Activated T-helper 1 cell treated with anti-CD3 and anti-CD28 coated beads, Interleukin-12 subunit alpha, Interleukin-12 subunit beta, Interleukin-2, Interleukin-4 antibody, amounts not matched to agents 30 ng/mL and 10 ng/mL and 1 ng/mL, durations not matched to agents 14 hours and 24 hours and 36 hours (primary cell): ENCODE measurements at regions of chr13 and their contacts with region 1.

Region 1: DNA sequence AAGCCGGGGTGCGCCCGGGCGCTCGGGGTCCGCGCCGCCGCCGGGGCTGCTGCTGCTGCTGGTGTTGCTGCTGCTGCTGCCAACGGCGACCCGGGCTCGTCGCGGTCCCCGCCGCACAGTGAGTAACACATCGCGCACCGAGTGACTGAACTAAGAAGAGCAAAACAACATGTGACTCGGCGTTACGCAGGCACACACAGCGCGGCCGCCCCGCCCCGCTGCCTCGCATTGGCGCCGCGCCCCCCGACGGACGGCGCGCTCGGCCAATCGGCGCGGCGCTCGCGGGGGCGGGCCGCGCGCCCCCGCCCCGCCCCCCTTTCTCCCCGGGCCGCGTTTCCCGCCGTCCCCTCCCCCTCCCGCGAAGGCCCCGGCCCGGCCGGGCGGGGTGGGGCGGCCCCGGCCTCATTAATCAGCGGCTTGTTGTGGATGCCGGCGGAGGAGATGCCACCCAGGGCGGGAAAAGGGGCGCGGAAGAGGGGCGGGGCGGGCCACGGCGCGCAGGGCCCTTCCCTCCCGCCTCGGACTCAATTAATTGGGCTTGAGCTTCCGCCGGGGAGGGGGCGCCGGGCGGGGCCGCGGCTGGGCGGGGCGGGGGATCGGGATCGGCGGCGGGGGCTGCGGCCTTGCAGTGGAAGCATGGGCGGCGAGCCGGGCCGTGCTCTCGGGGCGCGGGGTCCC is at the start of gene IRS2:
- DNase-seq: peak; percentile 89
- H3K4me3 Mint-ChIP-seq: peak within 1 kb of the TSS; percentile 78
- H3K27ac Mint-ChIP-seq: peak within 1 kb of the TSS; percentile 78
- H3K4me1 Mint-ChIP-seq: peaks cover 12% of the 10 kb centered on the region
- H3K27me3 Mint-ChIP-seq: peaks cover 26% of the 10 kb centered on the region
- total RNA-seq, gene IRS2: 3.9 and 4.3 TPM in 2 replicates

Region 2: DNA sequence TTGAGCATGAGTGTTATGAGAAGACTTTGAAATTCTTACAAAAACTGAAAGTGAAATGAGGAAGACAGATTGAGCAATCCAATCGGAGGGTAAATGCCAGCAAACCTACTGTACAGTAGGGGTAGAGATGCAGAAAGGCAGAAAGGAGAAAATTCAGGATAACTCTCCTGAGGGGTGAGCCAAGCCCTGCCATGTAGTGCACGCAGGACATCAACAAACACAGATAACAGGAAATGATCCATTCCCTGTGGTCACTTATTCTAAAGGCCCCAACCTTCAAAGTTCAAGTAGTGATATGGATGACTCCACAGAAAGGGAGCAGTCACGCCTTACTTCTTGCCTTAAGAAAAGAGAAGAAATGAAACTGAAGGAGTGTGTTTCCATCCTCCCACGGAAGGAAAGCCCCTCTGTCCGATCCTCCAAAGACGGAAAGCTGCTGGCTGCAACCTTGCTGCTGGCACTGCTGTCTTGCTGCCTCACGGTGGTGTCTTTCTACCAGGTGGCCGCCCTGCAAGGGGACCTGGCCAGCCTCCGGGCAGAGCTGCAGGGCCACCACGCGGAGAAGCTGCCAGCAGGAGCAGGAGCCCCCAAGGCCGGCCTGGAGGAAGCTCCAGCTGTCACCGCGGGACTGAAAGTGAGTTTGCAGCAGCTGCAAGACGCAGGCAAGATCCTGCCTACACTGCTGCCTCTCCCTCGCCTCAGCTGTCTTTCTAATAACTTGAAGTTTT is 1516.8 kb before region 1 on chr13 and contains the start of gene TNFSF13B:
- intact Hi-C with region 1: loop called (anchors 5 kb)
- DNase-seq: peak; percentile 32
- H3K4me3 Mint-ChIP-seq: peak within 1 kb of the TSS; percentile 85
- H3K27ac Mint-ChIP-seq: peak within 1 kb of the TSS; percentile 87
- H3K4me1 Mint-ChIP-seq: peaks cover 57% of the 10 kb centered on the region
- H3K27me3 Mint-ChIP-seq: no peaks in the 10 kb centered on the region
- total RNA-seq, gene TNFSF13B: 2.9 and 3.4 TPM in 2 replicates

Region 3: DNA sequence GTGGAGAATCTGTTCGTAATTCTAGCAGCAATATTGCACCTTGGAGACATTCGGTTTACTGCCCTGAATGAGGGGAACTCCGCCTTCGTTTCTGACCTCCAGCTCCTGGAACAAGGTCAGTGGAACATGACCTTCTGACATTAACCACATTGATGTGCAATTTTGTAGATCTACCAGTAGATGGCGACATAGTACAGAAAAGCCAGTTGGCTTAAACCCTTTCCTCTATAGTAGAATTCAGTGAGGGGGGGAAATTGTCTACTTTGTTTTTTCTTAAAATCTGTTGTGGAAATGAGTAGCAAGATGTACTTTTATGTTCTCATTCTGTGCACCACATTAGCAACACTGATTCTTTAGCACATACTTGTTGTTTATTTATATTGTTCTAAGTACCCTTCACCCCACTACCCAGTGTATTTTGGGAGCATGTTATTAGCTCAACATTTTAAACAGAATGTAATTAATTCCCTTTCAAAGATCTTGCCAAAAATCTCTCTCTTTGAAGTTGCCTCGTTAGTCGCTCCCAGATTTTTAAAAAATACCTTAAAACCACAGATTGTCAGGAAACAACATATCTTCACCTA is 825.0 kb before region 1 on chr13:
- intact Hi-C with region 1: loop called (anchors 1 kb)
- DNase-seq: no peak
- H3K4me3 Mint-ChIP-seq: no peak overlapping the region
- H3K27ac Mint-ChIP-seq: no peak overlapping the region
- H3K4me1 Mint-ChIP-seq: peaks cover 4% of the 10 kb centered on the region
- H3K27me3 Mint-ChIP-seq: peaks cover 4% of the 10 kb centered on the region

Region 4: GRCh38 chr13:109569958-109570711 is 216.5 kb before region 1 on chr13:
- intact Hi-C with region 1: loop called (anchors 5 kb)
- DNase-seq: peak; percentile 42
- H3K4me3 Mint-ChIP-seq: peak overlapping the region; percentile 16
- H3K27ac Mint-ChIP-seq: no peak overlapping the region
- H3K4me1 Mint-ChIP-seq: peaks cover 19% of the 10 kb centered on the region
- H3K27me3 Mint-ChIP-seq: peaks cover 13% of the 10 kb centered on the region

Region 5: DNA sequence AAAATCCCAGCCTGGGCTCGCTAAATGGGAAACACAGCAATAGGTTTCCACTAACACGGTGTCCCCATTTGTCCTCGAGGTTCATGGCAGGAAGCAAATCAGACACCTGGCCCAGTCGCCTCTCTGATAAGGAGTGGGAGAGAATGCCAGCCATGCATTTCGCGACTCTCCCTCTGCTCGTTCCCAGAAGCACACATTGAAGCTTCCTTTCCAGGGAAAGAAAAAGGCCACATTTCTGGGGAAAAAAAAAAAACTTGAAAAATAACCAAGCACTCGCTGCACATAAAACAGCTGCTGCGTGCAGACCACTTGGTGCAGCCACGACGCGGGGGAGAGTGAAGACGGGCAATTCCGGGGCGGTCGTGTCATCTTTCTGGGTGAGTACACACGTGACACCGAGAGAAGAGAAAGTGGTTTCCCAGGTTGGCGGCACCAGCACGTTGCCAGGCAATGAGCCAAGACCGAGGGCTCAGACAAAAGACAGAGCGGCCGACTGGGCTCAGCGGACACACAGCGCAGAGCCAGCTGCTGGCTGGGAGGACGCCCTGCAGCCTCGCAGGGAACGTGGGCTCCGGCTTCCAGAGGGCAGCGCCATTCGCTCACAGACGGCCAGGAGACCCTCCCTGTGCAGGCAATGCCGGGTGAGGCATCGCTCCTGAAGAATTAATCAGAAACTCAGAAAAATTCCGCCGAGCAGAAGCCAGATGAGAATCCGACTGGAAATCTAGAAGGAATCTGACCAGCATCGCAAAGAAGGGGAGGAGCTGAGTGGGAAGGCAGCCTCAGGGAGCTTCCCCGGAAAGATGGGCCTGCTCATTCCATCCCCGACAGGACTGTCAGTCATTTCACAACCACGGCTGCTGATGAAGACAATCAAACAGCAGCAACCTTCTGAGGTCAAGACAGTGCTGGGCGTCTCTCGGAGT is 83.0 kb after region 1 on chr13:
- intact Hi-C with region 1: no loop called
- DNase-seq: no peak
- H3K4me3 Mint-ChIP-seq: no peak overlapping the region
- H3K27ac Mint-ChIP-seq: no peak overlapping the region
- H3K4me1 Mint-ChIP-seq: no peaks in the 10 kb centered on the region
- H3K27me3 Mint-ChIP-seq: peaks cover 8% of the 10 kb centered on the region

Region 6: GRCh38 chr13:110138010-110138699 is 351.6 kb after region 1 on chr13:
- intact Hi-C with region 1: loop called (anchors 2 kb)
- DNase-seq: peak; percentile 59
- H3K4me3 Mint-ChIP-seq: peak overlapping the region; percentile 73
- H3K27ac Mint-ChIP-seq: peak overlapping the region; percentile 73
- H3K4me1 Mint-ChIP-seq: peaks cover 10% of the 10 kb centered on the region
- H3K27me3 Mint-ChIP-seq: peaks cover 41% of the 10 kb centered on the region

Region 7: GRCh38 chr13:110615322-110616102 is 828.9 kb after region 1 on chr13 and contains the start of gene NAXD:
- intact Hi-C with region 1: loop called (anchors 10 kb)
- DNase-seq: peak; percentile 80
- H3K4me3 Mint-ChIP-seq: peak within 1 kb of the TSS; percentile 96
- H3K27ac Mint-ChIP-seq: peak within 1 kb of the TSS; percentile 94
- H3K4me1 Mint-ChIP-seq: peaks cover 24% of the 10 kb centered on the region
- H3K27me3 Mint-ChIP-seq: peaks cover 4% of the 10 kb centered on the region
- total RNA-seq, gene NAXD: 22.0 and 22.2 TPM in 2 replicates